Activated CD4-positive, alpha-beta T cell treated with anti-CD3 and anti-CD28 coated beads, Interleukin-2, amount 10 ng/mL, durations not matched to agents 7 days and 5 days (primary cell): ENCODE measurements at regions of chr14 and their contacts with region 1.

Region 1: DNA sequence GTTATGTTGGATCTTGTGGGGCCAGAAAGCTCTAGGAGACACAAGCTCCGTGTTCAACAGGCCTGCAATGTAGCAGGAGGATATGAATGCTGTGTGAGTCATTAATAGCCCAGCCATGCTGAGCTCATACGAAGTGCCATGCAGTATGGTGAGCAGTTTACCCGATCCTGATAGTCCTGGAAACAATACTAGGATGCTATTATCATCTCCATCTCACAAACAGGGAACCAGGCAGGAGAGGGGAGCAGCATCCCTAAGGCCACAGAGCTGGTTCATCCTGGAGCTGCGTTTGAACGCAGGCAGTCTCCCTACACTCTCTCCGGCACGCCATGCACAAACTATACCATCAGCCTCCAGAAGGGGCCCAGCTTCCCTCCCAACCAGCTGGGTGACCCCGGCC is 20.5 kb downstream of the TTC7B start:
- DNase-seq: no peak
- H3K4me3 Mint-ChIP-seq: no peak overlapping the region
- H3K27ac Mint-ChIP-seq: no peak overlapping the region
- H3K4me1 Mint-ChIP-seq: no peaks in the 10 kb centered on the region
- H3K27me3 Mint-ChIP-seq: no peaks in the 10 kb centered on the region

Region 2: DNA sequence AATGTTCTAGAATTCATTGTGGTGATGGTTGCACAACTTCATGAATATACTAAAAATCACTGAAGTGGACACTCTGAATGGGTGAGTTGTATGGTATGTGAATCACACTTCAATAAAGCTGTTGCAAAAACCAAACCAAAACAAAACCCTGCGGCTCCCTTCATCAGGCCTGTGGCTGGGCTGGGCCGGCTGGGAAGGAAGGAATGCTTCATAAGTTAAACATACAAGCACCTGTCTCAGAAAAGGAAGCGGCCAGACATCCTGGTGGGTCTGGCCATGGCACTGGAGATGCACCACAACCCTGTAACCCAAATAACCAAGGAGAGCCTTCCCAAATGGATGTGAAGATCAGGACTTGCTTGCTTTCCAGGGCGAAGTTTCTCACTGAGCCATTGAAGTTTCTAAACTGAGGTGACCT is 14.4 kb before region 1 on chr14:
- CTCF ChIA-PET with region 1: interaction called, 11 read pairs
- POLR2A ChIA-PET with region 1: no interaction called
- DNase-seq: no peak
- H3K4me3 Mint-ChIP-seq: no peak overlapping the region
- H3K27ac Mint-ChIP-seq: no peak overlapping the region
- H3K4me1 Mint-ChIP-seq: no peaks in the 10 kb centered on the region
- H3K27me3 Mint-ChIP-seq: no peaks in the 10 kb centered on the region